Aorta (tissue), 5 donors: ENCODE measurements at regions of chr7 and their contacts with region 1.

Region 1: DNA sequence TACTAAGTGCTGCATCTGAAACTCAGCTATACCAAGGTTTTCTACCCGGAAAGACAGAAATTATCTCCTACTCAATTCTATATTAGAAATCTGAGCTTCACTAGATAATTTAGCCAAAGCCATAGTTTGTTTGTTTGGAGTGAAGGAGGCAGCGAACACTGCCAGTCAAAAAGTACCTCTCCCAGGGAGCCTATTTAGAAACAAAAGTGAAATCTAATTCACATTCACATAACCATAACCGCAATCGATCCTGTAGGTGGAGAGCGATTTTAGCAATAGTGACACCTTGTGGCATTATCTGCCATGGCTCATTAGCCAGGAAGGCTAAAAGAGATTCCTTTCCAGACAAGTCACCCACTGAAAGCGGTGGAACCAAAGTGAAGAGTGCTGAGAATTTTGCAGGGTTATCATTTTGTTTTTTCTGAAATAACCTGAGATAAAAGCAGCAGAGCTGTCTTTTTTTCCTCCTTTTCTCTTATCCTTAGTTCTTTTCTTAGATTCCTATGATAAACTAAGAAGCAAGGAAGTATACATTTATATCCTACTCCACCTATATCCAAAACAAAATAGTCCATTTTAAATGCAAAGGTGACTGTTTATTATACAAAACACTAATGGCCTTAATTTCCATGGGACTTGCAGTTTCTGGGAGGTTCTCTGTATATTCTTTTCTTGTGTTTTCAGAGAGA is 83.7 kb upstream of the BET1 start:
- DNase-seq: no peak
- ATAC-seq: peak; percentile 79
- H3K4me3 ChIP-seq: peak overlapping the region in 1 of 2 donors; percentile 43
- H3K27ac ChIP-seq: no peak overlapping the region
- H3K4me1 ChIP-seq: no peaks in the 10 kb centered on the region
- H3K27me3 ChIP-seq: no peaks in the 10 kb centered on the region

Region 2: GRCh38 chr7:93799750-93800357 is 288.0 kb before region 1 on chr7:
- intact Hi-C with region 1: loop called (anchors 5 kb)
- DNase-seq: no peak
- ATAC-seq: no peak
- H3K4me3 ChIP-seq: no peak overlapping the region
- H3K27ac ChIP-seq: no peak overlapping the region
- H3K4me1 ChIP-seq: no peaks in the 10 kb centered on the region
- H3K27me3 ChIP-seq: no peaks in the 10 kb centered on the region

Region 3: GRCh38 chr7:93902777-93903423 is 184.9 kb before region 1 on chr7:
- intact Hi-C with region 1: loop called in 1 of 2 experiments (anchors 2 kb)
- DNase-seq: no peak
- ATAC-seq: peak; percentile 67
- H3K4me3 ChIP-seq: no peak overlapping the region
- H3K27ac ChIP-seq: no peak overlapping the region
- H3K4me1 ChIP-seq: no peaks in the 10 kb centered on the region
- H3K27me3 ChIP-seq: no peaks in the 10 kb centered on the region